HCT116 (cell line): ENCODE measurements at regions of chr17 and their contacts with region 1.

Region 1: GRCh38 chr17:58352014-58352842 is at the start of gene SUPT4H1:
- DNase-seq: peak; percentile 94
- ATAC-seq: peak; percentile 93
- H3K4me3 ChIP-seq: peak within 1 kb of the TSS; percentile 79 to 82
- H3K27ac ChIP-seq: peak within 1 kb of the TSS; percentile 73
- H3K4me1 ChIP-seq: peaks cover 16 to 22% of the 10 kb centered on the region in 2 experiments
- H3K27me3 ChIP-seq: no peaks in the 10 kb centered on the region
- CTCF ChIP-seq: no peak
- POLR2A ChIP-seq: peak; percentile 90
- RAD21 ChIP-seq: peak; percentile 38
- total RNA-seq, gene SUPT4H1: 118 TPM

Region 2: DNA sequence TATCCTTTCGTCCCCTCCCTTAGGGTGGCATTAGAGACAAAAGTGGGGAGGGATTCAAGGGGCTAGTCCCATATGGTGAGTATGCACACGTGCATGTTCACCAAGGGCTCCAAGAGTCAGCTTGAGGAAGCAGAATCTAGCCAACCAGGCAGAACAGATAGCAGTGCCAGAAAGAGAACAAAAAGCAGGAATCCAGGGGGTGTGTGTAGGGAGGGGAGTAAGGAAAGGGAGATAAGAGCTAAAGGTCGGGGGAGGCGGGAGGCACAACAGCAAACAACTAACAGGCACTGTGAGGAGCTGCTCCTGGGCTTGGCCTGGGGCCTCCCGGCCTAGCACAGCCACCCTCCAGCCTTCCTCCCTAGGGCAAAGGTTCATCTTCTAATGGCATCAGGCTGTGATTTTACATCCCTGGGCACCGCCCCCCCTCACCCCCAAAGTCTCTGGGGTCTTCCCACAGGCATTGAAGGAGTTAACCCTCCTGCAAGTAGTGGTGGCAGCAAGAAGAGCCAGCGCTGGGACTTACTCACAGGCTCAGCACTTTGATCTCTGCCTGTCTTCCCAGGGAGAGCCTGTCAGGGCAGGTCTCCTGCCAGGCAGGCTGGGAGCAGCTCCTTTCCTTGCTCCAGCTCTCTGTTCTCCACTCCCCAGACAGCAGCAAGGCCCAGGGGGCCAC is 12.2 kb after region 1 on chr17:
- CTCF ChIA-PET with region 1: no interaction called
- POLR2A ChIA-PET with region 1: interaction called, 13 read pairs
- RAD21 ChIA-PET with region 1: no interaction called
- intact Hi-C with region 1: no loop called
- DNase-seq: no peak
- ATAC-seq: peak; percentile 65
- H3K4me3 ChIP-seq: no peak overlapping the region
- H3K27ac ChIP-seq: peak overlapping the region; percentile 46
- H3K4me1 ChIP-seq: peaks cover 26 to 29% of the 10 kb centered on the region in 2 experiments
- H3K27me3 ChIP-seq: no peaks in the 10 kb centered on the region
- CTCF ChIP-seq: no peak
- POLR2A ChIP-seq: no peak
- RAD21 ChIP-seq: no peak

Region 3: DNA sequence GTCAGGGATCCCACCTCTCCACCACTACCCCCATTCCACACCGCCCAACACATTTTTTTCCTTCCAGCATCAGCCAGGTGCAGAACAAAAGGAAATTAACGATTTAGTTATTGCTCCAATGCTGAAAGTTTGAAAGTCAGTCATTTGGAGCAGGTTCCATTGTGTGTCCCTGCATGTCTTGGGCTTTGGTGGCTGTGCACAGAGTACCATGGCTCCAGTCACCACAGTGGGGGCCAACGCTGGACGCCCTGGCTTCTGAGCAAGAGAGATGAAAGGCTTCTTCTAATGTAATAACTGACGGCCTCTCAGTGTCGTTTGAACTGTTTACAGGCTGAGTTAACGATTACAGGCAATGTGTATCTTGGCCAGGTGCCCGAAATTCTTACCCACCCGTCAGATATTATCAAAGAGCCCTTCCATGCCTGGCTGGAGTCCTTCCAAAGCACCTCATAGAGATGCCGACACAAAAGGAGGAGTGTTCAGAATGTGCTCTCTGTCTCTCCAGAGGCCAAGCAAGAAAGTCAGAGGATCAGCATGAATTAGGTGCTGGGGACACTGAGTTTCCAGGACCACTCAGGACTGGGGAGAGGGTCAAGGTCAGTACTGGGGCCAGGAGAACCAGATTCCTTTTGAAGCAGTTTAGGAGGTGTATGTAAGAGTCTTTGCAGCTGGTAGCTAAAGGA is 39.2 kb after region 1 on chr17:
- CTCF ChIA-PET with region 1: no interaction called
- POLR2A ChIA-PET with region 1: interaction called, 10 read pairs
- RAD21 ChIA-PET with region 1: no interaction called
- intact Hi-C with region 1: loop called (anchors 1 kb)
- DNase-seq: peak; percentile 100
- ATAC-seq: peak; percentile 79
- H3K4me3 ChIP-seq: peak overlapping the region; percentile 3 to 27; a peak in 2 of 4 replicates
- H3K27ac ChIP-seq: peak overlapping the region; percentile 64
- H3K4me1 ChIP-seq: peaks cover 92 to 100% of the 10 kb centered on the region in 2 experiments
- H3K27me3 ChIP-seq: no peaks in the 10 kb centered on the region
- CTCF ChIP-seq: no peak
- POLR2A ChIP-seq: no peak
- RAD21 ChIP-seq: peak; percentile 56

Region 4: GRCh38 chr17:58427807-58428206 is 75.6 kb after region 1 on chr17:
- CTCF ChIA-PET with region 1: interaction called, 7 read pairs
- POLR2A ChIA-PET with region 1: interaction called, 14 read pairs
- RAD21 ChIA-PET with region 1: interaction called, 3 read pairs
- intact Hi-C with region 1: no loop called
- DNase-seq: no peak
- ATAC-seq: peak; percentile 39
- H3K4me3 ChIP-seq: peak overlapping the region in 1 of 2 experiments; percentile 42; a peak in 2 of 4 replicates
- H3K27ac ChIP-seq: peak overlapping the region; percentile 46; the same call in 1 of the 2 replicates
- H3K4me1 ChIP-seq: peaks cover 15 to 19% of the 10 kb centered on the region in 2 experiments
- H3K27me3 ChIP-seq: no peaks in the 10 kb centered on the region
- CTCF ChIP-seq: no peak; a peak in 1 of 6 replicates
- POLR2A ChIP-seq: no peak
- RAD21 ChIP-seq: no peak